ENCODE measurements at regions of chr2 and their contacts with region 1.

Region 1: DNA sequence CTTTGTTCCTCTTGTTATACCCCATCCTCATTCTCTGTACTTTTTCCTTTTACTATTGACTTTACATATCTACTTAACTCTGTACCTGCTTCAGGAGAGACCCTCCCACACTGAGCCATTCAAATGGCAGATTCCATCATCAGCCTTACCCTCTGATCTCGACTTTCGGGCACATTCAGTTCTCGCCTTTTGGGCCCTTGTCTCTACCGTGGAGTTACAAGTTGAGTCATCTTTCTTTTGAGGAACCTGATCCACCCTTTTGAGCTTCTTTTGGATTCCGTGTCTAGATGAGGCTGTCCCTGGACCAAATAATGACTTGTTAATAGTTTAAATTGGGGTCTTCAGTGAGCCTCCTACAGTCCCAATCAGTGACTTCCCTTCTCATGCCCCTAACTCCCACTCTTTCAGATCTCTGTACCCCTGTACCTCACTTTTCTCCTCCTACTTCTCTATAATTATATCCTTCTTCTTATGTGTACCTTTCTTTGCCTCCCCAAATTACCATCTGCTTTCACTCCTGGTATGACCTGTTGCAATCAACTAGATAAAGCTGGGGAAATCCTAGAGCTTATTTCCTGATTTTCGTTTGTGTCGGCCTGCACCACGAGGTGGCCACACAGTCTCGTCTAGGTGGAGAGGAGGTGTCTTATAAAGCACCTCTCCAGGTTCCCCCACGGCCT is 17.2 kb downstream of the SP110 start:
- DNase-seq: peak in 4 of 5 donors; percentile 30 to 38 (median 33)
- H3K4me3 ChIP-seq: no peak overlapping the region
- H3K4me3 Mint-ChIP-seq: peak overlapping the region in 2 of 8 donors; percentile 1 to 33
- H3K27ac ChIP-seq: no peak overlapping the region
- H3K27ac Mint-ChIP-seq: peak overlapping the region; percentile 51 to 95 (median 79)
- H3K4me1 ChIP-seq: peaks cover 7% of the 10 kb centered on the region
- H3K4me1 Mint-ChIP-seq: peaks cover 17 to 22% (median 21%) of the 10 kb centered on the region in 4 donors
- H3K27me3 ChIP-seq: no peaks in the 10 kb centered on the region
- H3K27me3 Mint-ChIP-seq: no peaks in the 10 kb centered on the region

Region 2: GRCh38 chr2:230170532-230170931 is 32.0 kb before region 1 on chr2:
- CTCF ChIA-PET with region 1: no interaction called
- POLR2A ChIA-PET with region 1: no interaction called
- intact Hi-C with region 1: no loop called
- DNase-seq: peak; percentile 15 to 44 (median 26)
- H3K4me3 ChIP-seq: no peak overlapping the region
- H3K4me3 Mint-ChIP-seq: peak overlapping the region in 5 of 8 donors; percentile 22 to 60 (median 36)
- H3K27ac ChIP-seq: no peak overlapping the region
- H3K27ac Mint-ChIP-seq: peak overlapping the region; percentile 70 to 88 (median 82)
- H3K4me1 ChIP-seq: peaks cover 4% of the 10 kb centered on the region
- H3K4me1 Mint-ChIP-seq: peaks cover 0 to 13% (median 7%) of the 10 kb centered on the region in 4 donors
- H3K27me3 ChIP-seq: no peaks in the 10 kb centered on the region
- H3K27me3 Mint-ChIP-seq: no peaks in the 10 kb centered on the region

Region 3: GRCh38 chr2:230614913-230615332 is 412.4 kb after region 1 on chr2:
- CTCF ChIA-PET with region 1: interaction called, 11 read pairs
- POLR2A ChIA-PET with region 1: interaction called, 4 read pairs
- intact Hi-C with region 1: loop called (anchors 1 kb)
- DNase-seq: no peak
- H3K4me3 ChIP-seq: no peak overlapping the region
- H3K4me3 Mint-ChIP-seq: no peak overlapping the region
- H3K27ac ChIP-seq: no peak overlapping the region
- H3K27ac Mint-ChIP-seq: no peak overlapping the region
- H3K4me1 ChIP-seq: peaks cover 25% of the 10 kb centered on the region
- H3K4me1 Mint-ChIP-seq: peaks cover 9 to 19% (median 16%) of the 10 kb centered on the region in 4 donors
- H3K27me3 ChIP-seq: no peaks in the 10 kb centered on the region
- H3K27me3 Mint-ChIP-seq: no peaks in the 10 kb centered on the region

Region 4: DNA sequence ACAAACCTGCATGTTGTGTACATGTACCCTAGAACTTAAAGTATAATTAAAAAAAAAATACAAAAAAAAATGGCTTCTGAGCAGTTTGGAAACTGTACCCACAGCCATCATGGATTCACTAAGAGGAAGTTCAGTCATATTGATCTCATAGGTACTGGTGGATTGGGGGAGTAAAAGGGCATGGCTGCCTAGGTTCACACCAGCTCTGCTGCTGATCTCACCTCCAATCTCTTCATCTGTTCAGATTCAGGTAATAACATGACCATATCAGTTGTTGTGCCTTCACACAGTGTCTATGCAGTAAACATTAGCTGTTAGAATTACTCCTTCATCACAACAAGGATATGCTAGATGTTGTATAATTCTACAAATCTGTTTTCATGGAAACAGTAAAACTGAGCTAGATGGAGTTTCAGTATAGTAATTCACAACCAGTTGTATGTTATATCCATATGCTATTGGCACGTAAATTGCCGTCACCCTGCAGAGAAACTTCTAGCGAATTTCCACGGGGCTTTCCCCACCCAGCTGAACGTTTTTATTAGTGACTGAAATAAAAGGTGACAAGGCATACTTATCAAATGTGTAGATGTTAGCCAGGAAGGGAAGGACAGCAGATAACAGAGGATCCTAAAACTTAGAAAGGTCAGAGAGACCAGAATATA is 602.9 kb after region 1 on chr2:
- CTCF ChIA-PET with region 1: no interaction called
- POLR2A ChIA-PET with region 1: no interaction called
- intact Hi-C with region 1: no loop called
- DNase-seq: no peak
- H3K4me3 ChIP-seq: no peak overlapping the region
- H3K4me3 Mint-ChIP-seq: no peak overlapping the region
- H3K27ac ChIP-seq: no peak overlapping the region
- H3K27ac Mint-ChIP-seq: peak overlapping the region in 5 of 7 donors; percentile 1 to 80 (median 53)
- H3K4me1 ChIP-seq: no peaks in the 10 kb centered on the region
- H3K4me1 Mint-ChIP-seq: peaks cover 4 to 14% (median 11%) of the 10 kb centered on the region in 4 donors
- H3K27me3 ChIP-seq: no peaks in the 10 kb centered on the region
- H3K27me3 Mint-ChIP-seq: no peaks in the 10 kb centered on the region